CD4-positive, alpha-beta memory T cell (primary cell): ENCODE measurements at regions of chr1 and their contacts with region 1.

Region 1: DNA sequence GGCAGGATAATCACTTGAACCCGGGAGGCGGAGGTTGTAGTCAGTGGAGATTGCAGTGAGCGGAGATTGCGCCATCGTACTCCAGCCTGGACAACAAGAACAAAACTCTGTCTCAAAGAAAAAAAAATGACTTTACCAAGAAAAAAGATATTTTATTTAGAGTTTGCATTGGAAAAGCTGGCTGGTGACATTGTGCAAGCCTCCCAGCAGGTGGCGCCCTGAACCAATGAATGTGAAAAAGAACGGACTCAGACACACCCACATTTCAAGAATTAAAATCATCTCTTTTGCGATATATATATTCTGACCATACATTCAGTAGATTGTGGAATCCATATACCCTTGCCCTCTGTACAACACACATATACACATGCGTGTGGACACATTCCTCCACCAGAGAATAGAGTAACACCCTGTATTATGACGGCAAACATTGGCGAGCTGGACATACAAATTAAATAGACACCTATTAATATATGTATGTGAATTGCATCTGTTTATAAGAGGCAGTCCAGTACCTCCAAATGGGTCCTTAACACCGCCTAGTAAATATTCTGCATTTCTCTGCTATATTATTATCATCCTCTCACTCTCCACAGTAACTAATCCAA is 39.0 kb upstream of the CADM3 start:
- DNase-seq: peak; percentile 41 to 59 (median 49)
- H3K4me3 ChIP-seq: no peak overlapping the region
- H3K4me3 Mint-ChIP-seq: no peak overlapping the region
- H3K27ac ChIP-seq: no peak overlapping the region
- H3K27ac Mint-ChIP-seq: no peak overlapping the region
- H3K4me1 ChIP-seq: no peaks in the 10 kb centered on the region
- H3K4me1 Mint-ChIP-seq: no peaks in the 10 kb centered on the region
- H3K27me3 ChIP-seq: no peaks in the 10 kb centered on the region
- H3K27me3 Mint-ChIP-seq: peaks cover 4 to 12% of the 10 kb centered on the region in 2 donors

Region 2: GRCh38 chr1:159122005-159122621 is 10.3 kb before region 1 on chr1:
- CTCF ChIA-PET with region 1: interaction called, 11 read pairs
- POLR2A ChIA-PET with region 1: no interaction called
- intact Hi-C with region 1: no loop called
- DNase-seq: no peak
- H3K4me3 ChIP-seq: no peak overlapping the region
- H3K4me3 Mint-ChIP-seq: no peak overlapping the region
- H3K27ac ChIP-seq: no peak overlapping the region
- H3K27ac Mint-ChIP-seq: no peak overlapping the region
- H3K4me1 ChIP-seq: no peaks in the 10 kb centered on the region
- H3K4me1 Mint-ChIP-seq: no peaks in the 10 kb centered on the region
- H3K27me3 ChIP-seq: no peaks in the 10 kb centered on the region
- H3K27me3 Mint-ChIP-seq: peaks cover 2 to 7% of the 10 kb centered on the region in 2 donors

Region 3: DNA sequence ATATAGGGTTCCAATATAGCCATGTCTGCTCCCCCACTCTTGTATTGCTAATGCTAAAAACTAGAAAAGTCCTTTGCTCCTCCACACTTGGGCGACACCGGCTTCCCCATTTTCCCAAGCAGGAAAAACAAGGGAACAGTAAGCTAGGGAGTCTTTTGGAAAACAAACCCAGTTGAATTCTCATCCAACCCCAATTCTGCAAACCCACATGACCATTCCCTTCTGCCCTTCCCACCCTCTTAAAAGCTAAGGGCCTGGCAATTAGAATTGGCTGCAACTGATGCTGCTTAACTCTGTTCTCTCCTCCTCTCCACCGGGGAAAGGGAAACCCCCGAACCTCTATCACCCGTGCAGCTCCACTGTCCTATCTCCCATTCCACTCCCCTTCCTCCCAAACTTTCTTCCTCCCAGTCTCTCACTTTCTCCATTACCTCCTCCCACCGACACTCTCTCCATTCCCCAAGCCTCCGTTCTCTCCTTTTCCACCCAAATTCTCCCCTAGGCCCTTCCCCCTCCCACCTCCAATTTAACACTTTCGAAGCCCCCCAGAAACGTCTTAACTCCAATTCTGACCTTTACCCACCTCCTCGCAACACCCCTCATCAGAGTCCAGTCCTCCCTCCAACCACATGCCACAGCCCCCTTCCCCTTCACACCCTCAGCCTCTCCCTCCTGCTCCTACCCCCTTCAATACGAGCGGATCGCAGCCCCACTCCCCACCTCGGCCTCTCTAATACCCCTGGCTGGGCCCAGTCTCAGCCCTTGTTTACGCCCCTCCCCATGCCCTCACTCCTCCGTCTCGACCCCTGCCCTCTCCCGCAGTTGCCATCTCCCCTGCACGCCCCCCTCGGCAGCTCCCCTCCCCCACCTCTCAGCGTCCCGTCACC is 1999.4 kb after region 1 on chr1:
- CTCF ChIA-PET with region 1: no interaction called
- POLR2A ChIA-PET with region 1: no interaction called
- intact Hi-C with region 1: no loop called
- DNase-seq: peak in 1 of 5 donors; percentile 54
- H3K4me3 ChIP-seq: peak overlapping the region; percentile 78 to 100
- H3K4me3 Mint-ChIP-seq: peak overlapping the region in 1 of 8 donors; percentile 91
- H3K27ac ChIP-seq: peak overlapping the region; percentile 95
- H3K27ac Mint-ChIP-seq: peak overlapping the region in 3 of 7 donors; percentile 91 to 99 (median 95)
- H3K4me1 ChIP-seq: peaks cover 54% of the 10 kb centered on the region
- H3K4me1 Mint-ChIP-seq: peaks cover 32 to 51% (median 47%) of the 10 kb centered on the region in 4 donors
- H3K27me3 ChIP-seq: no peaks in the 10 kb centered on the region
- H3K27me3 Mint-ChIP-seq: no peaks in the 10 kb centered on the region